ENCODE measurements at regions of chr1 and their contacts with region 1.

Region 1: GRCh38 chr1:182084487-182085316 is 23.2 kb upstream of the ZNF648 start:
- DNase-seq: peak; percentile 78
- ATAC-seq: peak; percentile 95
- H3K4me3 ChIP-seq: peak overlapping the region in 2 of 3 experiments; percentile 6 to 11; a peak in 1 of 6 replicates
- H3K27ac ChIP-seq: no peak overlapping the region
- H3K4me1 ChIP-seq: peaks cover 10% of the 10 kb centered on the region
- H3K27me3 ChIP-seq: peaks cover 2 to 6% of the 10 kb centered on the region in 2 experiments; a peak in 2 of 5 replicates
- CTCF ChIP-seq: peak; percentile 96
- EP300 ChIP-seq: no peak
- POLR2A ChIP-seq: no peak
- RAD21 ChIP-seq: peak; percentile 91

Region 2: GRCh38 chr1:181479137-181479745 is 605.5 kb before region 1 on chr1:
- CTCF ChIA-PET with region 1: interaction called, 4 read pairs
- POLR2A ChIA-PET with region 1: no interaction called
- in situ Hi-C with region 1: no loop called
- intact Hi-C with region 1: loop called (anchors 2 kb)
- DNase-seq: peak; percentile 45
- ATAC-seq: peak; percentile 97
- H3K4me3 ChIP-seq: no peak overlapping the region
- H3K27ac ChIP-seq: no peak overlapping the region
- H3K4me1 ChIP-seq: no peaks in the 10 kb centered on the region
- H3K27me3 ChIP-seq: peaks cover 3 to 28% of the 10 kb centered on the region in 2 experiments; a peak in 3 of 5 replicates
- CTCF ChIP-seq: peak; percentile 85
- EP300 ChIP-seq: no peak
- POLR2A ChIP-seq: no peak
- RAD21 ChIP-seq: peak; percentile 58

Region 3: DNA sequence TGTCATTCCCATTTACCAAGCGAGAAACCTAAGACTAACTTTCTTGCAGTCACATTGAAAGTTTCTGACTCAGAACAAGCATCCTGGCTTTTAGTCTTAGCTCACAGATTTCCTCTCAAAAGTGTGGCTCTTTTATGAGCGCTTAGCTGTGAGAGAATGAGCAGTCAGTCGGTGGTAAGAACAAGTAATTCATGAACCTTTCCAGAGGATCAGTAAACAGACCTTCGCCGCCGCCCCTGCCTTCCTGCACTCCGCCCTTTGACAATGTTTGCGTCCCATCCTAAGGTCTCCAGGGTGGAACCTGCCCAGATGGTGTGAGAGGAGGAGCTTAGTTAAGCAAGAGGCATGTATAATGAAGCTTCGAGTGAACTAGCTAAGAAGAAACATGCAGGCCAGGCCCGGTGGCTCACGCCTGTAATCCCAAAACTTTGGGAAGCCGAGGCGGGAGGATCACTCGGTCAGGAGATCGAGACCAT is 164.5 kb after region 1 on chr1:
- CTCF ChIA-PET with region 1: no interaction called
- POLR2A ChIA-PET with region 1: no interaction called
- in situ Hi-C with region 1: no loop called
- intact Hi-C with region 1: loop called (anchors 2 kb)
- DNase-seq: peak; percentile 90
- ATAC-seq: peak; percentile 100
- H3K4me3 ChIP-seq: peak overlapping the region in 2 of 3 experiments; percentile 49 to 61; a peak in 2 of 6 replicates
- H3K27ac ChIP-seq: peak overlapping the region; percentile 80
- H3K4me1 ChIP-seq: peaks cover 28% of the 10 kb centered on the region
- H3K27me3 ChIP-seq: no peaks in the 10 kb centered on the region
- CTCF ChIP-seq: no peak
- EP300 ChIP-seq: peak in 1 of 2 experiments; percentile 44; a peak in 1 of 4 replicates
- POLR2A ChIP-seq: peak in 1 of 2 experiments; percentile 51; a peak in 1 of 4 replicates
- RAD21 ChIP-seq: 0 out of 2 replicates have a peak, but pooled peaks have one; percentile 19

Region 4: DNA sequence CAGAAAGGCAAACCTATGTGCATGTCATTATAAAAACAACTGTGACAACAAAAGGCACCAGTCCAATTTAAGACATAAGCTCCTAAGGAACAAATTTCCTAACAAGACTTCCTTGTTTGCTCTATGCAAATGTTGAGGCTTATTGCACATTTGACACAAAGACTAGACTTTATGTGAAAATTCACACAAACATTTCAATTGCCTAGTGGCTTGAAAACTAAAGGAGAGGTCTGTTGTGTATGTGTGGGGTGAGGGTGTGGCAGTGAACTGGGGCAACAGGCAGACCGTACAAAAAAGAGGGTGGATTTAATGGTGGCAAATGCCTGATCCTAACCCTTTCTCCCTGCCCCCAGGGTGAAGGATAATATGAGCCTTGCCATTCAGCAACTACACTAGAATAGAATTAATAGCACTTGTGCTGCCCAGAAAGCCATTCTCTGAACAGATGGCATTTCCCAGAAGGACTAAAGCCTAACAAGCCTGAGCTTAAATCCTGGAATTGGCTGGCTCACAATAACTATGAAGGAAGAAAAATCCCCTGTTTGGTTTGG is 233.0 kb after region 1 on chr1:
- CTCF ChIA-PET with region 1: no interaction called
- POLR2A ChIA-PET with region 1: no interaction called
- in situ Hi-C with region 1: no loop called
- intact Hi-C with region 1: loop called (anchors 1 kb)
- DNase-seq: no peak
- ATAC-seq: no peak
- H3K4me3 ChIP-seq: no peak overlapping the region
- H3K27ac ChIP-seq: no peak overlapping the region
- H3K4me1 ChIP-seq: peaks cover 29% of the 10 kb centered on the region
- H3K27me3 ChIP-seq: no peaks in the 10 kb centered on the region
- CTCF ChIP-seq: no peak
- EP300 ChIP-seq: no peak
- POLR2A ChIP-seq: no peak
- RAD21 ChIP-seq: no peak

Region 5: GRCh38 chr1:182446033-182446669 is 361.4 kb after region 1 on chr1:
- CTCF ChIA-PET with region 1: interaction called, 5 read pairs
- POLR2A ChIA-PET with region 1: no interaction called
- in situ Hi-C with region 1: no loop called
- intact Hi-C with region 1: loop called (anchors 1 kb)
- DNase-seq: peak; percentile 39
- ATAC-seq: peak; percentile 65
- H3K4me3 ChIP-seq: no peak overlapping the region
- H3K27ac ChIP-seq: no peak overlapping the region
- H3K4me1 ChIP-seq: no peaks in the 10 kb centered on the region
- H3K27me3 ChIP-seq: no peaks in the 10 kb centered on the region
- CTCF ChIP-seq: peak; percentile 76
- EP300 ChIP-seq: no peak
- POLR2A ChIP-seq: no peak
- RAD21 ChIP-seq: peak; percentile 43; the same call in 1 of the 2 replicates

Measured in HepG2 (cell line).